ENCODE measurements at regions of chr5 and their contacts with region 1.

Region 1: DNA sequence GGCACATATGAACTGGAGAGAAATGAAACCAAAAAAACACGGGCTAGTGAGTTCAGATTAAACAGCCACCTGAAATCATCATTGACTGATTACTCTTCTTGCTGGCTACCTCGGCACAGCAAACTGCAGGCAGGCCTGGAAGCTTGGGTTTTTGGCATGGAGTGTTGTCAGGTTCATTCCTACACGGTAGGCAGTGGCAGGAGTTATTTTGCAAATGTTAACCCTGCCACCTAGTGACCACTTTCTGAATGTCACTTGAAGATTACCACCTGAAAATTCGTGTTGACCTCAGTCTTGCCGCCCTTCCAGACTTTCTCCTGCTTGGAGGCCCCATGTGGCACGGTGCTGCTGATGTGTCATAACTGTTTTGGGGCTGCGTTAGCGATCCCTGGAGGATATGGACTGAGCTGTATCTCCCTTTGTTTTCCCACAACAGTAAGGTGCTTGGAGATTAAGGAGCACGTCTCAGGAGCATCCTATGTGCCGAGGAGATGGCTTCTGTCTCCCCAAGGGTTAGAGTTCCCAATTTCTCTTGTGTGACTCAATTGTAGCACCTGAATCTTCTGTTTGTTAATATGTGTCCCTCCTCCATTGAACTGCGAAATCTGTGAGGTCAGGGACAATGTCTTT is 12.7 kb upstream of the CD180 start:
- DNase-seq: peak; percentile 81 to 84
- ATAC-seq: peak; percentile 88 to 93
- H3K4me3 ChIP-seq: no peak overlapping the region
- H3K27ac ChIP-seq: peak overlapping the region; percentile 7 to 58; a peak in 4 of 6 replicates
- H3K4me1 ChIP-seq: peaks cover 33% of the 10 kb centered on the region
- CTCF ChIP-seq: peak; percentile 89
- EP300 ChIP-seq: no peak
- POLR2A ChIP-seq: no peak
- RAD21 ChIP-seq: peak; percentile 93 to 94

Region 2: GRCh38 chr5:67156976-67157583 is 52.2 kb before region 1 on chr5:
- CTCF ChIA-PET with region 1: interaction called, 190 read pairs
- POLR2A ChIA-PET with region 1: interaction called, 8 read pairs
- DNase-seq: peak; percentile 27 to 47
- ATAC-seq: peak; percentile 72 to 80; a peak in 4 of 6 replicates
- H3K4me3 ChIP-seq: no peak overlapping the region
- H3K27ac ChIP-seq: no peak overlapping the region
- H3K4me1 ChIP-seq: peaks cover 24% of the 10 kb centered on the region
- CTCF ChIP-seq: peak; percentile 80
- EP300 ChIP-seq: no peak
- POLR2A ChIP-seq: no peak
- RAD21 ChIP-seq: peak; percentile 60 to 63

Region 3: DNA sequence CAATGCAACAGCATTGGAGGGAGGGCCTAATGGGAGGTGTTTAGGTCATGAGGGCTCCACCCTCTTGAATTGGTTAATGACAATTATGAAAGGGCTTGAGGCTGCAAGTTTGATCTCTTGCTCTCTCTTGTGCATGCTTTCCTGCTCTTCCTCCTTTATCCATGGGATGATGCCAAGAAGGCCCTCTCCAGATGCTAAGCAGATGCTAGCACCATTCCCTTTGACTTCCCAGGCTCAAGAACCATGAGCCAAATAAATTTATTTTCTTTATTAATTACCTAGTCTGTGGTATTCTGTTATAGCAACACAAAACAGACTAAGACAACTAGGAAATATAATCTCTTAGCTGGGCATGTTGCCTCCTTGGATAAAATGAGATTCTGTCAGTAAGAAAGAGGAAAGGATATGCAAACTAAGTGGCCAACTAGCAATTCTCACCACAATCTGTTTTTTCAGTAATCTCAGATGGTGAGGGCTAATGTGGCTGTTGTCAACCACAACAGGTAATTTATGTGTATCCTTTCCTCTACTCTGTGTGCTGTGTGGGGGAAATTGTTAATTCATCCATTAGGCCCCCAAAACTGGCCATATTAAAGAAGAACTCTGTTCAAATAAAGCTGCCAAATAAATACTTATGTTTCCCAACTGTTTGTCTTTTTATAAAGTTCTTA is 256.4 kb after region 1 on chr5:
- CTCF ChIA-PET with region 1: no interaction called
- POLR2A ChIA-PET with region 1: no interaction called
- DNase-seq: no peak
- ATAC-seq: no peak
- H3K4me3 ChIP-seq: no peak overlapping the region
- H3K27ac ChIP-seq: no peak overlapping the region
- H3K4me1 ChIP-seq: no peaks in the 10 kb centered on the region
- CTCF ChIP-seq: no peak
- EP300 ChIP-seq: no peak
- POLR2A ChIP-seq: no peak
- RAD21 ChIP-seq: no peak